Activated T-helper 2 cell treated with anti-CD3 and anti-CD28 coated beads, Interferon-gamma antibody, Interleukin-2, Interleukin-4, amounts not matched to agents 10 μg/mL and 5 μg/mL and 100 μg/mL, durations not matched to agents 14 hours and 24 hours and 36 hours (primary cell): ENCODE measurements at regions of chr16 and their contacts with region 1.

Region 1: GRCh38 chr16:11915644-11916523 is at the start of gene GSPT1:
- DNase-seq: peak; percentile 99
- H3K4me3 Mint-ChIP-seq: peak within 1 kb of the TSS; percentile 95
- H3K27ac Mint-ChIP-seq: peak within 1 kb of the TSS; percentile 94
- H3K4me1 Mint-ChIP-seq: peaks cover 32% of the 10 kb centered on the region
- H3K27me3 Mint-ChIP-seq: peaks cover 9% of the 10 kb centered on the region
- total RNA-seq, gene GSPT1: 216 and 226 TPM in 2 replicates

Region 2: DNA sequence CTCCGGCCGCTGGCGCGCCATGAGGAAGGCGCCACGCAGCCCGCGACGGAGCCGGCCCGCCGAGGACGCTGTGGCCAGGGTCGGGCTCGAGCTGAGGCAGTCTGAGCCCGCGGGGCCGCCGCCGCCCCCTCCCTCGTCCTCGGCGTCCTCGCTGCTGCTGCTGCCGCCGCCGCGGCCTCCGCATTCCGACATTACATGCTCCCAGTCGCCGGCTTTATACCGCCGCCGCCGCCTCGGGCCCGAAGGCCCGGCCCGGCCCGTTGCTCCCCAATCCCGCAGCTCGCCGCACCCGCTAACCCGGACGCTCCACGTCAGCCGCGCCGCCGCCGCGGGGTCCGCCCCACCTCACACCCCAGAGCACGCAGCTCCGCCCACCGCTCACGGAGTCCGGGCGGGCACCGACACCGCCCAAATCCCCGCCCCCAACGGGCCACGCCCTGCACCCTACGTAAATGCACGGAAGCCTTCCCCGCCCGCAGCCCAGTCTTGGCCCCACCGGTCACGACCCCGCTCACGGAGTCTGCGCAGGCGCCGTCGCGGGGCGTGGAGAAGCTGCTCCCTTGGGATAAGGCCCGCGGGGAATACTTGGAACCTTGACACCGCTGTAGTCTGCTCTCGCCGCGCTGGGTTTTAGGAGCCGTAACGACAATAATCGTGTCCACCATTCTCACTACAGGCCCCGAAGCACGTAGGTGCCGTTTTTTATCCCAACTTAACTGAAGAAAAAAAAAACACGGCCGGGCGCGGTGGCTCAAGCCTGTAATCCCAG is 173.2 kb before region 1 on chr16 and contains the start of gene TXNDC11:
- intact Hi-C with region 1: loop called (anchors 10 kb)
- DNase-seq: peak; percentile 99
- H3K4me3 Mint-ChIP-seq: peak within 1 kb of the TSS; percentile 93
- H3K27ac Mint-ChIP-seq: peak within 1 kb of the TSS; percentile 91
- H3K4me1 Mint-ChIP-seq: peaks cover 50% of the 10 kb centered on the region
- H3K27me3 Mint-ChIP-seq: no peaks in the 10 kb centered on the region
- total RNA-seq, gene TXNDC11: 48.0 and 53.0 TPM in 2 replicates

Region 3: GRCh38 chr16:11797166-11797956 is 118.5 kb before region 1 on chr16 and contains the start of gene ZC3H7A:
- intact Hi-C with region 1: loop called (anchors 5 kb)
- DNase-seq: peak; percentile 94
- H3K4me3 Mint-ChIP-seq: peak within 1 kb of the TSS; percentile 93
- H3K27ac Mint-ChIP-seq: peak within 1 kb of the TSS; percentile 96
- H3K4me1 Mint-ChIP-seq: peaks cover 67% of the 10 kb centered on the region
- H3K27me3 Mint-ChIP-seq: no peaks in the 10 kb centered on the region
- total RNA-seq, gene ZC3H7A: 63.4 and 71.1 TPM in 2 replicates

Region 4: GRCh38 chr16:11871193-11871592 is 44.7 kb before region 1 on chr16:
- intact Hi-C with region 1: no loop called
- DNase-seq: no peak
- H3K4me3 Mint-ChIP-seq: no peak overlapping the region
- H3K27ac Mint-ChIP-seq: no peak overlapping the region
- H3K4me1 Mint-ChIP-seq: peaks cover 1% of the 10 kb centered on the region
- H3K27me3 Mint-ChIP-seq: no peaks in the 10 kb centered on the region

Region 5: DNA sequence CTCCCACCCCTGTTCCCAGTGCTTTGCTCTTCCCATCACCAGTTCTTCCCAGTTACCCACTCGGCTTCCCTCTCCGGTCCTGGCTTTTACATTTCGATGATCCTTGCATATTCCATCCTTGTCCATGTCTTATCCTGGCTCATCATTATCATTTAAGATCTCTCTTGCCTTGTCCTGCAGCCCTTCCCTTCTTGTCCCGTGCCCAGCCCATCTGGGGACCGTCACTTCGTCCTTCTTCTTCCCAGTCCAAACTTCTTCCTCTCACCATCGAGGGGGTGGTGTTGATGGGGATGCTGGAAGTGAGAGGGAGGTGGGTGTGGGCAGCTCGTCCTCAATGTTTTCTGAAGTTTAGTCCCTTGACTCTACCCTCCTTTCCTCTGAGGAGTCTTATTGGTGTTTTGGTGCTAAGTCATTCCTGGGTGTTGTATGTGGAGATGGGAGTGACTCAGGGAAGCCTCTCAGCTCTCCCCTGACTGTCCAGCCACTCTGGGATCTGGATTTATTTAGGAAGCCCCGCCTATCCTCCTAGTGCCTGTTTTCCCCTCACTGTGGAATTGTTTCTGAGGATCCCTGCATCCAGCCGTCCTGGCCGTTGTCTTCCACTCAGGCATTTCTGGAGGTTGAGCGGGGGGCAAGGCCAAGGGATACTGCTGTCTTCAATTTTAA is 61.6 kb after region 1 on chr16:
- intact Hi-C with region 1: loop called (anchors 2 kb)
- DNase-seq: no peak
- H3K4me3 Mint-ChIP-seq: peak overlapping the region; percentile 96
- H3K27ac Mint-ChIP-seq: peak overlapping the region; percentile 43
- H3K4me1 Mint-ChIP-seq: peaks cover 24% of the 10 kb centered on the region
- H3K27me3 Mint-ChIP-seq: no peaks in the 10 kb centered on the region